CD8-positive, alpha-beta T cell (primary cell): ENCODE measurements at regions of chr19 and their contacts with region 1.

Region 1: GRCh38 chr19:11155373-11156120 is at the start of gene SPC24:
- DNase-seq: peak; percentile 76 to 97 (median 87)
- ATAC-seq: peak; percentile 96
- H3K4me3 ChIP-seq: peak within 1 kb of the TSS; percentile 52 to 62
- H3K4me3 Mint-ChIP-seq: peak within 1 kb of the TSS; percentile 87
- H3K27ac ChIP-seq: peak within 1 kb of the TSS in 1 of 2 experiments; percentile 51
- H3K27ac Mint-ChIP-seq: peak within 1 kb of the TSS; percentile 27
- H3K4me1 ChIP-seq: peaks cover 13% of the 10 kb centered on the region
- H3K4me1 Mint-ChIP-seq: peaks cover 14% of the 10 kb centered on the region
- H3K27me3 ChIP-seq: no peaks in the 10 kb centered on the region
- H3K27me3 Mint-ChIP-seq: no peaks in the 10 kb centered on the region
- CTCF ChIP-seq: no peak
- total RNA-seq, gene SPC24: 0.79 to 0.86 TPM

Region 2: DNA sequence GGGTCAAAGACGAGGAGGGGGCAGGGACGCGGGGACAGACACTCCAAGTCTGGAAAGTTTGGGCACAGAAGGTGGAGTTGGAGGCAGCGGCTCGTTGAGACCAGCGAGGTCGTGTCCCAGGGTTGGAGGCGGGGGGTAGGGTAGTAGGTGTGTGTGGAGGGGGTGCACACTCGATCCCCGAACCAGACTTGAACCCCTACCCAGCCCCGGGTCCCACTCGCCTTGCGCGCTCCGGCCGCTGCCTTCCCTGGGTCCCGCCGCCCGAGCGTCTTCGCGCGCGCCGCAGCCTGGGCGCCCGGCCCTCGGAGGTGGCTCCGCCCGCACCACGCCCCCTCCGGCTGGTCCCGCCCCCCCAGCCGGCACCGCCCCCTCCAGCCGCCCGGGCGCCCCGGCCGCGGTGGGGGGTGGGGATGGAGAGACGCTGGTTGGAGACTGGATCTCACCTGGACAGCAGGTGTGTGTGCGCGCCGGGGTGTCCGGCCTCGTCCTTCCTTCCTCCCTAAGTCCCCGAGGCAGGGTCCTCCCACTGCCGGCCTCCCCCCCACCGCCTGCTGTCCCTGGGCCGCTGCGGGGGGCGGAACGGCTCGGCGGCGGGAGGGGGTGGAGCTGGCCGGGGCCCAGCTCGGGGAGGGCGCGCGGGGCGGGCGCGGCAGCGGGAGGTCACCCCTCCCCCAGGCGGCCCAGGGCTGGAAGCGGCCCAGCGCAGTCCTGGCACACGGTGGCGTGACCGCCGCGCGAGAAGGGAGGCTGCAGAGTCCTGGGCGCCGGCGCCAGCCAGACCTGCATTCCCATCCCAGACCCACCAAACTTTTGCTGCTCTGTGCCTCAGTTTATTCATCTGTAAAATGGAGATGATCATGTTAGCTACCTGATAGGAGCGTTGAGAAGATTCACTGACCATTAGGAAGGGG is 42.0 kb after region 1 on chr19 and contains the start of gene KANK2:
- CTCF ChIA-PET with region 1: no interaction called
- POLR2A ChIA-PET with region 1: no interaction called
- intact Hi-C with region 1: loop called in 1 of 2 experiments (anchors 5 kb)
- DNase-seq: peak; percentile 46 to 83 (median 70)
- ATAC-seq: peak; percentile 95
- H3K4me3 ChIP-seq: peak within 1 kb of the TSS; percentile 43 to 46
- H3K4me3 Mint-ChIP-seq: peak within 1 kb of the TSS; percentile 73
- H3K27ac ChIP-seq: no peak within 1 kb of the TSS
- H3K27ac Mint-ChIP-seq: no peak within 1 kb of the TSS
- H3K4me1 ChIP-seq: peaks cover 6% of the 10 kb centered on the region
- H3K4me1 Mint-ChIP-seq: peaks cover 10% of the 10 kb centered on the region
- H3K27me3 ChIP-seq: peaks cover 3 to 5% of the 10 kb centered on the region in 2 experiments
- H3K27me3 Mint-ChIP-seq: peaks cover 9% of the 10 kb centered on the region
- CTCF ChIP-seq: no peak
- total RNA-seq, gene KANK2: 0.22 TPM in 1 of 2 experiments, not detected in the other